Adrenal gland (tissue), 19 donors: ENCODE measurements at regions of chr3 and their contacts with region 1.

Region 1: GRCh38 chr3:11803977-11804892 is 42.5 kb downstream of the TAMM41 start:
- DNase-seq: peak; percentile 38 to 70 (median 57)
- H3K4me3 ChIP-seq: no peak overlapping the region
- H3K27ac ChIP-seq: no peak overlapping the region
- H3K4me1 ChIP-seq: no peaks in the 10 kb centered on the region
- H3K27me3 ChIP-seq: no peaks in the 10 kb centered on the region
- CTCF ChIP-seq: peak; percentile 52 to 79 (median 76)
- POLR2A ChIP-seq: no peak

Region 2: GRCh38 chr3:11379233-11379823 is 424.9 kb before region 1 on chr3:
- intact Hi-C with region 1: loop called (anchors 10 kb)
- DNase-seq: peak in 1 of 7 donors; percentile 21
- H3K4me3 ChIP-seq: no peak overlapping the region
- H3K27ac ChIP-seq: peak overlapping the region in 2 of 5 donors; percentile 21 to 24
- H3K4me1 ChIP-seq: peaks cover 0 to 17% of the 10 kb centered on the region in 2 donors
- H3K27me3 ChIP-seq: no peaks in the 10 kb centered on the region
- CTCF ChIP-seq: peak; percentile 36 to 87 (median 73)
- POLR2A ChIP-seq: no peak

Region 3: GRCh38 chr3:11445883-11446282 is 358.4 kb before region 1 on chr3:
- intact Hi-C with region 1: no loop called
- DNase-seq: no peak
- H3K4me3 ChIP-seq: no peak overlapping the region
- H3K27ac ChIP-seq: no peak overlapping the region
- H3K4me1 ChIP-seq: no peaks in the 10 kb centered on the region
- H3K27me3 ChIP-seq: no peaks in the 10 kb centered on the region
- CTCF ChIP-seq: no peak
- POLR2A ChIP-seq: no peak